H1 (cell line): ENCODE measurements at regions of chr1 and their contacts with region 1.

Region 1: GRCh38 chr1:81781749-81782148 is 19.0 kb upstream of the ADGRL2 start:
- DNase-seq: no peak
- H3K4me3 ChIP-seq: no peak overlapping the region
- H3K27ac ChIP-seq: no peak overlapping the region
- H3K4me1 ChIP-seq: peaks cover 0 to 12% (median 0%) of the 10 kb centered on the region in 4 experiments; a peak in 2 of 7 replicates
- H3K27me3 ChIP-seq: no peaks in the 10 kb centered on the region
- CTCF ChIP-seq: peak; percentile 10 to 49 (median 14); a peak in 2 of 4 replicates
- EP300 ChIP-seq: no peak
- POLR2A ChIP-seq: no peak
- RAD21 ChIP-seq: peak; percentile 32 to 49; a peak in 3 of 4 replicates

Region 2: DNA sequence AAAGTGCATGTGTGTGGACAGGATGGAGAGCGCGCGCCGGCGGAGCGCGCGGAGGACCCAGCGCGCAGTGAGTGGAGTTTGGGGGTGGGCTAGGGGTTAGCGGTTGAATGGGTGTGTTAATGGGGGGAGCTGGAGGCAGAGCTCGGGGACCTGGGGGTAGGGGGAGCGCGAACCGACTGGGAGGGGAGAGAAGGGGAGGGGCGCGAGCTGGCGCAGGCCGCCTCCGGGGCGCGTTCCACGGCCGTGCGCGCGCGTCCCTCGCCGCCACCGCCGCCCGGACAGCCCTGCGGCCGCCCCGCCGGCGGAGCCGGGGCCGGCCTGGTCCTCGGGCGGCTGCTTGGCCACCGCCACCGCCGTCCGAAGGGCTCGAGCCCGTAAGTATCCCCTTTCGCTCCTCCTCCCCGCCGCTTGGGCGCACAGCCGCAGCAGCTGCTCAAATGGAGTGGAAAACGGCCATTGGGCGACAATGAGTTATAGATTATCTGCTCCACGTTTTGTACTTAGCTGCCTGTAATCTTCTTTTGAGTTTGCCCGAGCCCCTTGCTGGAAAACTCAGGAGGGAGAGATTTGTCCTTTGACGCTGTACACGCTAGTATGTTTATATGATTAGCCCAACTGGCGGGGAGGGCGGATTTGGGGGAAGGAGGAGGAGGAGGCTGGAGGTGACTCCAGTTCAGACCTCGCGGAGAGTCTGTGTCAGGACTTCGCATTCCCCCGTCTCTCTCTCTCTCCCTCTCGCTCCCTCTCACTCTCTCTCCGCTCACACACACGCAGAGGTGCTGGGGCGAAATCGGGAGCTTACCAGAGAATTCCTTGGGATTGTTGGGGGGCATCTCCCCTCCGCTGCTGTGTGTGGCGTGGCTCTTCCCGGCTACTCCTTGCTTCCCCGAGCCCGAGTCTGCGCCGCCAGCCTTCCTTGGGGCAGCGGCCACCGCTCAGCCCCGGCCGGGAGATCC is 19.2 kb after region 1 on chr1 and contains the start of gene ADGRL2:
- CTCF ChIA-PET with region 1: interaction called, 11 read pairs
- POLR2A ChIA-PET with region 1: interaction called, 3 read pairs
- DNase-seq: peak in 1 of 2 experiments; percentile 86
- H3K4me3 ChIP-seq: peak within 1 kb of the TSS; percentile 65 to 99 (median 92)
- H3K27ac ChIP-seq: peak within 1 kb of the TSS; percentile 83
- H3K4me1 ChIP-seq: peaks cover 0 to 15% (median 1%) of the 10 kb centered on the region in 4 experiments; a peak in 4 of 7 replicates
- H3K27me3 ChIP-seq: peaks cover 0 to 1% (median 0%) of the 10 kb centered on the region in 4 experiments; a peak in 1 of 7 replicates
- CTCF ChIP-seq: no peak
- EP300 ChIP-seq: peak; percentile 11 to 46; a peak in 2 of 3 replicates
- POLR2A ChIP-seq: peak; percentile 66 to 75
- RAD21 ChIP-seq: peak in 1 of 2 experiments; percentile 21; a peak in 2 of 4 replicates
- total RNA-seq, gene ADGRL2: 121 and 124 TPM in 2 replicates

Region 3: GRCh38 chr1:81848880-81849682 is 67.3 kb after region 1 on chr1:
- CTCF ChIA-PET with region 1: no interaction called
- POLR2A ChIA-PET with region 1: no interaction called
- DNase-seq: no peak
- H3K4me3 ChIP-seq: no peak overlapping the region; a peak in 1 of 8 replicates
- H3K27ac ChIP-seq: no peak overlapping the region
- H3K4me1 ChIP-seq: peaks cover 0 to 12% (median 6%) of the 10 kb centered on the region in 4 experiments; a peak in 4 of 7 replicates
- H3K27me3 ChIP-seq: no peaks in the 10 kb centered on the region
- CTCF ChIP-seq: no peak
- EP300 ChIP-seq: no peak
- POLR2A ChIP-seq: no peak
- RAD21 ChIP-seq: no peak

Region 4: DNA sequence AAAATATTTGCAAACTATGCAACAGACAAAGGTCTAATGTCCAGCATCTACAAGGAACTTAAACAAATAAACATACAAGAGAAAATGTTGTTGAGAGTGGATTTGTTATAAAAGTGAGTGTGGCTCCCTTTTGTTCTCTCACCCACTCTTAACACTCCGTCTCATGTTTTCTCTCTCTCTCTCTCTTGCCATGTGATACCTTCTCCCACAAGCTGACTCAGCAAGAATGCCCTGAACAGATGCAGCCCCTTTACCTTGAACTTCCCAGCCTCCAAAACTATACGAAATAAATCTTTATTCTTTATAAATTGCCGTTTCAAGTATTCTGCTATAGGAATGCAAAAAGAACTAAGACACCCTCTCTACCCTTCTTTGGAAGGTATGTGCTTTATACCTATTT is 253.1 kb after region 1 on chr1:
- CTCF ChIA-PET with region 1: no interaction called
- POLR2A ChIA-PET with region 1: no interaction called
- DNase-seq: no peak
- H3K4me3 ChIP-seq: no peak overlapping the region
- H3K27ac ChIP-seq: no peak overlapping the region
- H3K4me1 ChIP-seq: no peaks in the 10 kb centered on the region
- H3K27me3 ChIP-seq: no peaks in the 10 kb centered on the region
- CTCF ChIP-seq: no peak
- EP300 ChIP-seq: no peak
- POLR2A ChIP-seq: no peak
- RAD21 ChIP-seq: no peak